Lower leg skin (tissue), 4 donors: ENCODE measurements at regions of chr19 and their contacts with region 1.

Region 1: DNA sequence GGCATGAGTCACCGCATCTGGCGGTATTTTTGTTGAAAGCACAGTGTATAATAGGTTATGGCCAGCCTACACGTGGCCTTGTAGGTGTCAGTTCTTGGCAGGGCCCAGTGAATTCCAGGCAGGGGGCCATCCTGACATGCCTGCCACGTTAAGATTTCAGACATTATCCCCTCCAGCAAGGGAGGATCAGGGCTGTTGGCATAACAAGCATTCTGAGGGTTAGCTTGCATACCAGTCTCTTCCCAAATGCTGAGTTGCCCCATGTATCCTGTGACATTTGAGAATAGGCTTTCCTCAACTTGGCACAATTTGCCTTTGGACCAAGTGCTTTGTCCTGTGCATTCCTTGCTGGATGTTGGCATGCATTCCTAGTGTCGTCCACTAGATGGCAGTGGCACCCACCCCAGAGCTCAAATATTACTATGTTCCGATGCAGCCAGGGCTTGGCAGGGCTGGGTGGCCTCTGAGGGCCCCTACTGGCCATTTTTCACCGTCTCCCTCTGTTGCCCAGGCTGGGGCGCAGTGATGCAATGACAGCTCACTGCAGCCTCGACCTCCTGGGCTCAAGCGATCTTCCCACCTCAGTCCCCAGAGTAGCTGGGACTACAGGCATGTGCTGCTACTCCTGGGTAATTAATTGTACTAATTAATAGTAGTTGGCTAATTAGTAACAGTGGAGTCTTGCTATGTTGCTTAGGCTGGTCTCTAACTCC is 31.2 kb downstream of the NLRP12 start:
- DNase-seq: peak; percentile 80 to 95
- H3K4me3 ChIP-seq: no peak overlapping the region
- CTCF ChIP-seq: no peak
- POLR2A ChIP-seq: no peak

Region 2: DNA sequence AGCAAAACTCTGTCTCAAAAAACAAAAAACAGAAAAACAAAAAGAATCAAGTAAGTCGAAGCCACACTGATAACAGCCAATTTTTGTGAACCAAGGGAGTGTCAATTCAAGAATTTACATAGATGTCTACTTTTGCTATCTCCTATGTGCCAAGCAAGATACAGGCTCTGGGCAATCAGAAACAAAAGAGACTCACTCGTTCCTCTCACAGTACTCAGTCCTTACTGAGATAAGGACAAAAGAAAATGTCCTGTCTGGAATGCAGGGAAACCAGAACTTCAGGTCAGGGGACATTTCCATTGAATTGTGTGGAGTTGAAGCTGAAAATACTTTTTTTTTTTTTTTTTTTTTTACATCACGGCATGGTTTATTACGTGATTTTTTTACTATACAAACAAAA is 21.7 kb before region 1 on chr19:
- intact Hi-C with region 1: no loop called
- DNase-seq: no peak
- H3K4me3 ChIP-seq: no peak overlapping the region
- CTCF ChIP-seq: no peak
- POLR2A ChIP-seq: no peak

Region 3: GRCh38 chr19:54023191-54023590 is 230.3 kb after region 1 on chr19:
- intact Hi-C with region 1: loop called (anchors 5 kb)
- DNase-seq: no peak
- H3K4me3 ChIP-seq: no peak overlapping the region
- CTCF ChIP-seq: no peak
- POLR2A ChIP-seq: no peak

Region 4: GRCh38 chr19:54207977-54208783 is 415.3 kb after region 1 on chr19:
- intact Hi-C with region 1: no loop called
- DNase-seq: peak; percentile 79 to 90
- H3K4me3 ChIP-seq: no peak overlapping the region
- CTCF ChIP-seq: no peak
- POLR2A ChIP-seq: no peak